ENCODE measurements at regions of chr12 and their contacts with region 1.

Region 1: DNA sequence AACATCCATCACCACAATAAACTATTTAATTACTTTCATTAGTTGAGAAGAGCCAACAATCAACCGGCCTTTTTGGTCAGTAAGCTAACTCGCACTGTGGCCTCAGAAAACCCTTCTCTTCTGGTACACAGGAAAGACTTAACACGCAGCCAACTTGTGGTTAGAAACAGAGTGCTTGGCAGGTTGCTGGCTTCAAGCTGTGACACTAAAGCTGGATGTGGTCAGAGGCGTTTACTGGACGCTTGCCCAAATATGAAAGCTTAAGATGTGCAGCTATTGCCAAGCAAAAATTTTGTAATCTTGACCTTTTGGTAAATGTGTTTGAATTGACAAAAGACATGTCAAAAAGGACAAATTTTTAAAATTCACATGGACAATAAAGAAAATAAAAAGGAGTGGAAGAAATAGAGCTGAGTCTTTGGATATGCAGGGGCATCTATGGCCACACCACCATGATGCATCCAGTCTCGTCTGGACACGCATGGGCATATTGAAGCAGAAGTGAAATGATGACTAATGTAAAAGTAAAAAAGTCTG is 2.6 kb upstream of the KLRK1 start:
- DNase-seq: peak; percentile 55 to 81 (median 74)
- H3K4me3 ChIP-seq: peak overlapping the region in 1 of 7 experiments; percentile 29
- H3K27ac ChIP-seq: no peak overlapping the region
- H3K4me1 ChIP-seq: peaks cover 16 to 59% (median 23%) of the 10 kb centered on the region in 4 experiments
- H3K27me3 ChIP-seq: peaks cover 0 to 85% (median 0%) of the 10 kb centered on the region in 5 experiments

Region 2: GRCh38 chr12:10409387-10409786 is 16.9 kb after region 1 on chr12 and contains the start of gene KLRC4:
- CTCF ChIA-PET with region 1: interaction called, 11 read pairs
- POLR2A ChIA-PET with region 1: interaction called, 3 read pairs
- DNase-seq: peak; percentile 56 to 90 (median 88)
- H3K4me3 ChIP-seq: peak within 1 kb of the TSS in 1 of 7 experiments; percentile 3
- H3K27ac ChIP-seq: no peak within 1 kb of the TSS
- H3K4me1 ChIP-seq: peaks cover 0 to 16% (median 3%) of the 10 kb centered on the region in 4 experiments
- H3K27me3 ChIP-seq: peaks cover 0 to 81% (median 0%) of the 10 kb centered on the region in 5 experiments

Region 3: DNA sequence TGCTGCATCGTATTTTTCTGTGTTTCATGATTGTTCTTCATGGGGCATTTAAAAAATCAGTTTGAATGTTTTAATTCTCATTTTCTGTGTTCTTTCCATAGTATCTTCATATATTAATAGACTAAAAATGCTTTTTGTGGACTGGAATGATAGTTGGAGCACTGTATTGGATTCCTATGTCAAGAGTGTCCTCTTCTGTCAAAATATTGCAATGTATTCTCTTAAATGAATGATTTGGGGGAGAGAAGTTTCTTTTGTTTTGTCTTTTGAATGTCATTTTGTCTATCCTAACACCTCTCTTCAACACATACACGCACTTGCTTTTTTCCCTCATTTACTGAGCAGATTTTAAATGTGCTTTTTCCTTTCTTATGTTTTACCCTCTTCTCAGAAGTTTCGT is 108.6 kb after region 1 on chr12:
- CTCF ChIA-PET with region 1: no interaction called
- POLR2A ChIA-PET with region 1: no interaction called
- DNase-seq: peak in 1 of 3 donors; percentile 1
- H3K4me3 ChIP-seq: no peak overlapping the region
- H3K27ac ChIP-seq: no peak overlapping the region
- H3K4me1 ChIP-seq: no peaks in the 10 kb centered on the region
- H3K27me3 ChIP-seq: peaks cover 0 to 55% (median 0%) of the 10 kb centered on the region in 5 experiments

Measured in common myeloid progenitor, CD34-positive (primary cell).